H1 (cell line): ENCODE measurements at regions of chr12 and their contacts with region 1.

Region 1: GRCh38 chr12:5428332-5429221 is 3.3 kb upstream of the NTF3 start:
- DNase-seq: peak in 1 of 2 experiments; percentile 57
- H3K4me3 ChIP-seq: peak overlapping the region; percentile 26 to 74 (median 39); a peak in 6 of 8 replicates
- H3K27ac ChIP-seq: no peak overlapping the region
- H3K4me1 ChIP-seq: peaks cover 5 to 24% (median 11%) of the 10 kb centered on the region in 4 experiments
- H3K27me3 ChIP-seq: peaks cover 20 to 44% (median 31%) of the 10 kb centered on the region in 4 experiments; a peak in 6 of 7 replicates
- CTCF ChIP-seq: peak; percentile 61 to 69 (median 63)
- EP300 ChIP-seq: no peak
- POLR2A ChIP-seq: no peak
- RAD21 ChIP-seq: peak; percentile 87 to 90

Region 2: GRCh38 chr12:5171701-5172100 is 256.9 kb before region 1 on chr12:
- CTCF ChIA-PET with region 1: interaction called, 15 read pairs
- POLR2A ChIA-PET with region 1: no interaction called
- DNase-seq: peak; percentile 23 to 61
- H3K4me3 ChIP-seq: no peak overlapping the region
- H3K27ac ChIP-seq: no peak overlapping the region
- H3K4me1 ChIP-seq: peaks cover 0 to 4% (median 0%) of the 10 kb centered on the region in 4 experiments; a peak in 3 of 7 replicates
- H3K27me3 ChIP-seq: 0 out of 7 replicates have a peak, but pooled peaks cover 0 to 2% (median 0%) of the 10 kb centered on the region in 4 experiments
- CTCF ChIP-seq: peak in 2 of 3 experiments; percentile 74 to 83; a peak in 3 of 4 replicates
- EP300 ChIP-seq: no peak
- POLR2A ChIP-seq: no peak
- RAD21 ChIP-seq: peak; percentile 86 to 91

Region 3: DNA sequence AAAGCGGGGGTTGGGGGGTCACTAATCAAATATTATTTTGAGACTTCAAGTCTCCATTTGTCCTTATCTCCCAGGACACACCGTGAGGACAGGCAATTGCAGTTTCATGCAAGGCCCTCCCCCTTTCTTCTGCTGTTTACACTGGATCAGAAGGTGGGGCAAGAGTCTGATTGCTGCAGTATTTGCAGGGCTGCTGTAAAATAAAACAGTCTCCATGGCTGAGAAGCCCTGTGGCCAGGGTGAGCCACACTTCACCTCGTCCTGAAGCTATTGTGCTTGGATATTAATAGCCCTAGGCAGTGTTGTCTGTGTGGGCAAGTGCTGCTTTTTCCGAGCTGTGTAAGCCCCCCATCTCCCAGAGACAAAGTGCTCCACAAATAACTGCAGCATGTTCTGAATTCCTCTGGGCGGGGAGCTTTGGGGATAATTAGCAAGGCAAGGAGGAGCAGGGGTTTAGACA is 184.0 kb before region 1 on chr12:
- CTCF ChIA-PET with region 1: interaction called, 11 read pairs
- POLR2A ChIA-PET with region 1: no interaction called
- DNase-seq: no peak
- H3K4me3 ChIP-seq: no peak overlapping the region
- H3K27ac ChIP-seq: peak overlapping the region; percentile 18; the same call in 1 of the 2 replicates
- H3K4me1 ChIP-seq: peaks cover 3 to 28% (median 19%) of the 10 kb centered on the region in 4 experiments; a peak in 6 of 7 replicates
- H3K27me3 ChIP-seq: no peaks in the 10 kb centered on the region
- CTCF ChIP-seq: no peak
- EP300 ChIP-seq: no peak
- POLR2A ChIP-seq: no peak
- RAD21 ChIP-seq: no peak

Region 4: GRCh38 chr12:5442251-5443006 is 13.9 kb after region 1 on chr12:
- CTCF ChIA-PET with region 1: interaction called, 108 read pairs
- POLR2A ChIA-PET with region 1: interaction called, 5 read pairs
- DNase-seq: no peak
- H3K4me3 ChIP-seq: no peak overlapping the region
- H3K27ac ChIP-seq: no peak overlapping the region
- H3K4me1 ChIP-seq: peaks cover 2 to 8% (median 3%) of the 10 kb centered on the region in 4 experiments; a peak in 4 of 7 replicates
- H3K27me3 ChIP-seq: no peaks in the 10 kb centered on the region; a peak in 1 of 7 replicates
- CTCF ChIP-seq: peak; percentile 7 to 73 (median 61)
- EP300 ChIP-seq: no peak
- POLR2A ChIP-seq: no peak
- RAD21 ChIP-seq: peak; percentile 80 to 87

Region 5: GRCh38 chr12:5511644-5512600 is 83.3 kb after region 1 on chr12:
- CTCF ChIA-PET with region 1: interaction called, 21 read pairs
- POLR2A ChIA-PET with region 1: no interaction called
- DNase-seq: peak in 1 of 2 experiments; percentile 77
- H3K4me3 ChIP-seq: no peak overlapping the region
- H3K27ac ChIP-seq: no peak overlapping the region
- H3K4me1 ChIP-seq: peaks cover 0 to 7% (median 3%) of the 10 kb centered on the region in 4 experiments; a peak in 4 of 7 replicates
- H3K27me3 ChIP-seq: no peaks in the 10 kb centered on the region
- CTCF ChIP-seq: peak; percentile 73 to 82 (median 76)
- EP300 ChIP-seq: no peak
- POLR2A ChIP-seq: no peak
- RAD21 ChIP-seq: peak; percentile 66 to 83

Region 6: DNA sequence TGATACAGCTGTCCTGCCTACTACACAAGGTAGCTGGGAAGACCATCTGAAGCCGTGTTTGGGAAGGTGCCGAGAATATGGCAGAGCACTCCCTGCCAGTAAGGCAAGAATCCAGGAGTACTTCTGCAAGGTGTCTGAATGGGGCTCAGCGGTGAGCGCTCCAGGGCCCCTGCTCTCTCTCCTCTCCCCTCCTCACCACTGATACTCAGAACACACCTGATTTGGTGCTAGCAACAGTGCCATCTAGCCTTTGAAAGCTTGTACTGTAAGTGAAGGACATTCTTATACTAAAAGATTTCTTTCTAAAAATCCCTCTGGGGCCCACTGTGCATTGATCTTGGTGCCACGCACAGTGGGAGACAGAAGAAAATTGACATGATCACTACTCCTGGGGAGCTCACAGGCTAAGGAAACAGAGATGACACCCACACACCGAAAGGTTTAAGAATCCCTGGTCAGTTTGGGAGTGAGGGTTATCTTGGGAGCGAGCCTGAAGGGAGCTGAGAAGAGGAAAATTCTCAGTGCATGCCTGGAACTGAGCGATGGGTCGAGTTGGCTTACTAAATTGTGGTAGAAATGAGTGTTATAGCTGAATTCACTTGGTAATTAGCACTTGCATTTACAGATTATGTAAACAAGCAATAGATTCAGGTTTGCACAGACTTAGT is 220.2 kb after region 1 on chr12:
- CTCF ChIA-PET with region 1: interaction called, 28 read pairs
- POLR2A ChIA-PET with region 1: no interaction called
- DNase-seq: peak; percentile 43 to 52
- H3K4me3 ChIP-seq: no peak overlapping the region
- H3K27ac ChIP-seq: no peak overlapping the region
- H3K4me1 ChIP-seq: no peaks in the 10 kb centered on the region; a peak in 1 of 7 replicates
- H3K27me3 ChIP-seq: no peaks in the 10 kb centered on the region
- CTCF ChIP-seq: peak in 2 of 3 experiments; percentile 71 to 76; a peak in 3 of 4 replicates
- EP300 ChIP-seq: no peak
- POLR2A ChIP-seq: no peak
- RAD21 ChIP-seq: peak; percentile 81 to 85

Region 7: DNA sequence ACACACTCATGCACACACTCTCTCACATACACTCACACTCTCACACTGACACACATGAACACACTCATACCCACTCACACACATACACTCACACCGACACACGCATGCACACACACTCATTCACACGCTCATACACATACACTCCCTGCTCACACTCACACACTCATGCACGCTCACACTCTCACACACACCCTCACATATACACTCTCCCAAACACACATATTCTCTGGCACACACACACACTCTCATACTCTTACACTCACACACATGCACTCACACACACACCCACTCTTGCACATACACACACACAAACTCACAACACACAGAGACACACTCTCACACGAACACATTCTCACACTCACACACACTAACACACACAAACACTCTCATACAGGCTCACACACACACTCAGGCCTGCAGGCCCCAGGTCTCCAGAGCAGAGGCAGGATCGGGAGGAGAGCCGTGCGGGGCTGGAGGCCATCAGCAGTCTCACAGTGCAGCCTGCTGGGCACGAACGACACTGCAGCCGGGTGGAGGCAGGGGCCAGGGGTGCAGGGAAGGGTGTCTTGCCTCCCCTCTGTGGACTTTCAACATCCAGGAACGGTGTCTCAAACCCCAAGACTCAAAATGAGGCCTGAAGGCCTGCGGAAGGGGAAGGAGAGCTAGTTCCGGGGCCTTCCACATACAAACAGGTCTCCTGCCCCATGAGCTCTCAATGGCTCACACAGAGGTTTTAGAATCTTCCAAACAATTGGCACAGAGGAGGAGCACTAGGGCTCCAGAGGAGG is 367.8 kb after region 1 on chr12:
- CTCF ChIA-PET with region 1: interaction called, 11 read pairs
- POLR2A ChIA-PET with region 1: no interaction called
- DNase-seq: peak in 1 of 2 experiments; percentile 87
- H3K4me3 ChIP-seq: no peak overlapping the region
- H3K27ac ChIP-seq: no peak overlapping the region
- H3K4me1 ChIP-seq: no peaks in the 10 kb centered on the region
- H3K27me3 ChIP-seq: 0 out of 7 replicates have a peak, but pooled peaks cover 0 to 3% (median 0%) of the 10 kb centered on the region in 4 experiments
- CTCF ChIP-seq: peak; percentile 95 to 100 (median 97)
- EP300 ChIP-seq: no peak
- POLR2A ChIP-seq: no peak
- RAD21 ChIP-seq: peak; percentile 98